ENCODE measurements at regions of chr3 and their contacts with region 1.

Region 1: GRCh38 chr3:83076041-83076440 is 1314.6 kb upstream of the GBE1 start:
- DNase-seq: no peak
- ATAC-seq: no peak
- H3K4me3 ChIP-seq: no peak overlapping the region
- H3K4me3 Mint-ChIP-seq: no peak overlapping the region
- H3K27ac ChIP-seq: no peak overlapping the region
- H3K27ac Mint-ChIP-seq: no peak overlapping the region
- H3K4me1 ChIP-seq: no peaks in the 10 kb centered on the region
- H3K4me1 Mint-ChIP-seq: no peaks in the 10 kb centered on the region
- H3K27me3 ChIP-seq: no peaks in the 10 kb centered on the region
- H3K27me3 Mint-ChIP-seq: no peaks in the 10 kb centered on the region

Region 2: DNA sequence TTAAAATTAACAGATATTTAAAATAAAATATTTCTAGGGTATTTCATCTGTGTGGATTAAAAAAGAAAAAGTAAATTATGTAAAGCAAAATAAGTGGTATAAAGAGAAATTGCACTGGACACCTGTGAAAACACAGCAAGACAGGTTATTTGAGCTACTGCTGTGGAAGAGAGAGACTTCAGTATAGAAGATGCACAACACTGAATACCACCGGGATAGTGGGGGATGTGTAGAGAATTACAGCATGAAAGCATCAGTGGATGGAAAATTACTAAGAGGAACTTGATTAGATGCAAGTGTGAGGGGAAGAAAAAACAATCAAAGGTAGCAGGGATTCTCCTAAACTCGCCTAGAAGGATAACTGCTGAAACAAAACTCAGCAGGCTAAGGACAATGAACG is 72.1 kb before region 1 on chr3:
- CTCF ChIA-PET with region 1: no interaction called
- POLR2A ChIA-PET with region 1: interaction called in 1 of 2 experiments, 11 read pairs
- DNase-seq: no peak
- ATAC-seq: no peak
- H3K4me3 ChIP-seq: no peak overlapping the region
- H3K4me3 Mint-ChIP-seq: no peak overlapping the region
- H3K27ac ChIP-seq: no peak overlapping the region
- H3K27ac Mint-ChIP-seq: no peak overlapping the region
- H3K4me1 ChIP-seq: no peaks in the 10 kb centered on the region
- H3K4me1 Mint-ChIP-seq: no peaks in the 10 kb centered on the region
- H3K27me3 ChIP-seq: no peaks in the 10 kb centered on the region
- H3K27me3 Mint-ChIP-seq: no peaks in the 10 kb centered on the region

Region 3: GRCh38 chr3:83023050-83023449 is 53.0 kb before region 1 on chr3:
- CTCF ChIA-PET with region 1: no interaction called
- POLR2A ChIA-PET with region 1: no interaction called
- DNase-seq: no peak
- ATAC-seq: no peak
- H3K4me3 ChIP-seq: no peak overlapping the region
- H3K4me3 Mint-ChIP-seq: no peak overlapping the region
- H3K27ac ChIP-seq: no peak overlapping the region
- H3K27ac Mint-ChIP-seq: no peak overlapping the region
- H3K4me1 ChIP-seq: no peaks in the 10 kb centered on the region
- H3K4me1 Mint-ChIP-seq: no peaks in the 10 kb centered on the region
- H3K27me3 ChIP-seq: no peaks in the 10 kb centered on the region
- H3K27me3 Mint-ChIP-seq: no peaks in the 10 kb centered on the region